CD4-positive, alpha-beta T cell (primary cell): ENCODE measurements at regions of chr16 and their contacts with region 1.

Region 1: DNA sequence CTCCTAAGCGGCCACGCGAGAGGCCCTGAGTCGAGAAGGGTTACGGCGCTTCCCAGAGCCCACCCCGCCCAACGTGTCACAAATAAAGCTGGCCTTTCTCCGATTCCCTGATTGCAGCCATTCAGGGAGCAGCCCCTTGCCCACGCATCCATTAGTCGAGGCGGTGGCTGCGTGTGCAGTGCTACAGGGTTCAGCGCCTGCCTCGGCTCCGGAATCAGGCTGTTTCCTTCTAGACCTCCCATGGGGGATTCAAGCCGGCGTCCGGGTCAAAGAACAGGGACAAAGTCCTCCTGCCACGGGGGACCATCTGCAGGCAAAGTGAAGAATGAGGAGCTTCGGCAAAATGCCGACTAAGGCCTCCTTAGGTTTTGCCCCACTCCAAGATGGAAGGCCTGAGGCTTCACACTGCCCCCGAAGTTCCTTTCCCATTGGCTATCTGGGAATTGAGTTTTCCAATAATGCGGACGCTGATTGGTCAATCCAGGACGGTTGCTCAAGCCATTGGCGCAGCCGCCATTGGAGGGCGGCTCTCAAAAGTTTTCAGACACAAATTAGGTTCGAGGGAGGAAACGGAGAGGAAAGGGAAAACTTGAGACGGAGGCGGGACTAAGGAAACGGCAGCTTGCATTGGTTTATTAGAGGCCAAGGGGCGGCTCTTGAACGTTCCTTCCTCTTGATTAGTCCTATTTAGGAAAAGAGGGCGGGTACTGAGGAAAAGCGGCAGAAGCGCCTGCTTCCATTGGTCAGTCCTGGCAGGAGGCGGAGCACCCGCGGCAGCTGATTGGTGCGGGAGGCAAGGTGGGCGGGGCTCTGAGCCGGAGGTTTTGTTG is 430 bp upstream of the KATNB1 start:
- DNase-seq: peak; percentile 94 to 100 (median 96)
- ATAC-seq: peak; percentile 88
- H3K4me3 ChIP-seq: peak overlapping the region; percentile 78
- H3K4me3 Mint-ChIP-seq: peak overlapping the region; percentile 95
- H3K27ac ChIP-seq: peak overlapping the region; percentile 60 to 77
- H3K27ac Mint-ChIP-seq: peak overlapping the region; percentile 87
- H3K4me1 ChIP-seq: peaks cover 29% of the 10 kb centered on the region
- H3K4me1 Mint-ChIP-seq: peaks cover 33% of the 10 kb centered on the region
- H3K27me3 ChIP-seq: no peaks in the 10 kb centered on the region
- H3K27me3 Mint-ChIP-seq: no peaks in the 10 kb centered on the region
- CTCF ChIP-seq: no peak

Region 2: DNA sequence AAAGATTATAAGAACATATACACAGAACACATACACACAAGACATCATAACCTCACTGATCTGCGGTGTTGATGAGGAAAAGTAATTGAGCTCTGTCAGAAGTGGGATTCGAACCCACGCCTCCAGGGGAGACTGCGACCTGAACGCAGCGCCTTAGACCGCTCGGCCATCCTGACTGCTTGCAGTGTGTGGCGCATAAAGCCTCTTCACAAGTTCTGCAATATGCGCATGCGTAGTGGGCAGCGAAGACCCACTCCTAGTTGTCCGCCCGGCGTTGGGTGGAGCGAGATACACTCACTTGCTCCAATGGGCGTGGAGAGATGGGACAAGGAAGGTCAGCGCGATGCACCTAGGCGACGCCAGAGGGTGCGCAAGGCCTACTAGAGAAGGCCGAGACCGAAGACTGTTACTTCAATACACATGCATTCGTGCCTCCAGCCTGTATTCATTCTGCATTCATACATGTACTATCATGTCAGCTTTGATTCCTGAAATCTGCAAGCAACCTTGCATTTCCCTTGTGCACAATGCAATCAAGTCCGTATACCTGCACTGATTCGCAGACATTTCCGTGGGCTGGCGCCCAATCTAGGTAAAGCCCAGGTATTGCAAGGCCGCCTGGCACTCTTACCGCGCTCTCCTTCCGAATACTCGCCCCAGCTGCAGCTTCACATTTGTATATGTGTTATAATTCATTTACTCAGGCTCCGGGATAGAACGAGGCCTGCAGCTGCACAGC is 434.6 kb before region 1 on chr16:
- CTCF ChIA-PET with region 1: no interaction called
- POLR2A ChIA-PET with region 1: interaction called, 3 read pairs
- intact Hi-C with region 1: loop called in 1 of 2 experiments (anchors 5 kb)
- DNase-seq: peak; percentile 97 to 100 (median 99)
- ATAC-seq: peak; percentile 91
- H3K4me3 ChIP-seq: peak overlapping the region; percentile 58
- H3K4me3 Mint-ChIP-seq: no peak overlapping the region
- H3K27ac ChIP-seq: peak overlapping the region; percentile 50 to 79
- H3K27ac Mint-ChIP-seq: no peak overlapping the region
- H3K4me1 ChIP-seq: peaks cover 54% of the 10 kb centered on the region
- H3K4me1 Mint-ChIP-seq: peaks cover 16% of the 10 kb centered on the region
- H3K27me3 ChIP-seq: no peaks in the 10 kb centered on the region
- H3K27me3 Mint-ChIP-seq: no peaks in the 10 kb centered on the region
- CTCF ChIP-seq: peak; percentile 88

Region 3: DNA sequence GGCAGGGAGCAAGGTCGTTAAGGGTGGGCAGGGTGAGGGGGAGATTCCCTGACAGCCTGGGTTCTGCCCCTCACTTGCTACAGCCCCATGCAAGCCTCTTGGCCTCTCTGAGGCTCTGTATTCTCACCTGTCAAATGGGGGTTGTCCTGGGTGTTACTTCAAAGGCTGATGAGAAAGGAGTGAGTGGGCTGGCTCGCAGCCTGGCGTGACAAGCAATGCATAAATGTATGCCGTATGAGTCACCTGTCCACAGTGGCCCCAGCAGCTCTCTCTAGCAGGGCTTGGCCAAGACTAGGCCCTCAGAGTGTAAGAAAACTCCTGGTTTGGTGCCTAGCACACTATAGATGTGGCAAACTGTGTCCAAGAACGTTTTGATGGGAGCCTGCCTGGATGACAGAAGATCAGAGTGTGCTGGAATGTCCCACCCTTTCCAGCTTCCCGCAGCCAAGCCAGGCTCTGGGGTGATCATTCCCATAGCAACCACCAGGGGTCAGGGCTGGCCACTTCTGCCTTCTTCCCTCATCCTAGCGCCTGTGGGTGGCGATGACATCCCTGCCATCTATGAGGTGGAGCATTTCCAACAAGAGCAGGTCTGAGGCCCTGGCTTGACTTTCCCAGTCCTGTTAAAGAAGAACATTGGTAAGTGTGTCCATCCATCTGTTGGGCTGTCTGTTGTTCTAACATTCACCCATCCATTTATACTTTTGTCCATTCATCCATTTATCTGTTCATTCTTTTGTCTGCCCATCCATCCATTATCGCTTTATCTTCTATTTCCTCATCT is 143.9 kb before region 1 on chr16:
- CTCF ChIA-PET with region 1: no interaction called
- POLR2A ChIA-PET with region 1: interaction called, 4 read pairs
- intact Hi-C with region 1: loop called (anchors 2 to 5 kb)
- DNase-seq: peak; percentile 40 to 81 (median 52)
- ATAC-seq: peak; percentile 45
- H3K4me3 ChIP-seq: no peak overlapping the region
- H3K4me3 Mint-ChIP-seq: peak overlapping the region; percentile 57
- H3K27ac ChIP-seq: no peak overlapping the region
- H3K27ac Mint-ChIP-seq: peak overlapping the region; percentile 70
- H3K4me1 ChIP-seq: peaks cover 32% of the 10 kb centered on the region
- H3K4me1 Mint-ChIP-seq: peaks cover 42% of the 10 kb centered on the region
- H3K27me3 ChIP-seq: no peaks in the 10 kb centered on the region
- H3K27me3 Mint-ChIP-seq: no peaks in the 10 kb centered on the region
- CTCF ChIP-seq: peak; percentile 83

Region 4: GRCh38 chr16:57984331-57985203 is 249.4 kb after region 1 on chr16:
- CTCF ChIA-PET with region 1: no interaction called
- POLR2A ChIA-PET with region 1: no interaction called
- intact Hi-C with region 1: loop called in 1 of 2 experiments (anchors 5 kb)
- DNase-seq: peak; percentile 85 to 97 (median 92)
- ATAC-seq: peak; percentile 98
- H3K4me3 ChIP-seq: peak overlapping the region; percentile 81
- H3K4me3 Mint-ChIP-seq: peak overlapping the region; percentile 94
- H3K27ac ChIP-seq: peak overlapping the region; percentile 29 to 50
- H3K27ac Mint-ChIP-seq: peak overlapping the region; percentile 56
- H3K4me1 ChIP-seq: peaks cover 22% of the 10 kb centered on the region
- H3K4me1 Mint-ChIP-seq: peaks cover 15% of the 10 kb centered on the region
- H3K27me3 ChIP-seq: no peaks in the 10 kb centered on the region
- H3K27me3 Mint-ChIP-seq: no peaks in the 10 kb centered on the region
- CTCF ChIP-seq: no peak

Region 5: GRCh38 chr16:58198022-58198683 is 463.0 kb after region 1 on chr16 and contains the start of gene CSNK2A2:
- CTCF ChIA-PET with region 1: no interaction called
- POLR2A ChIA-PET with region 1: interaction called, 3 read pairs
- intact Hi-C with region 1: loop called in 1 of 2 experiments (anchors 10 kb)
- DNase-seq: peak; percentile 48 to 88 (median 66)
- ATAC-seq: peak; percentile 94
- H3K4me3 ChIP-seq: peak within 1 kb of the TSS; percentile 65
- H3K4me3 Mint-ChIP-seq: peak within 1 kb of the TSS; percentile 90
- H3K27ac ChIP-seq: no peak within 1 kb of the TSS
- H3K27ac Mint-ChIP-seq: peak within 1 kb of the TSS; percentile 82
- H3K4me1 ChIP-seq: peaks cover 19% of the 10 kb centered on the region
- H3K4me1 Mint-ChIP-seq: peaks cover 54% of the 10 kb centered on the region
- H3K27me3 ChIP-seq: peaks cover 5% of the 10 kb centered on the region in 2 experiments
- H3K27me3 Mint-ChIP-seq: peaks cover 7% of the 10 kb centered on the region
- CTCF ChIP-seq: no peak
- total RNA-seq, gene CSNK2A2: 49.0 to 51.0 TPM

Region 6: GRCh38 chr16:59369523-59369922 is 1634.4 kb after region 1 on chr16:
- CTCF ChIA-PET with region 1: no interaction called
- POLR2A ChIA-PET with region 1: no interaction called
- intact Hi-C with region 1: no loop called
- DNase-seq: no peak
- ATAC-seq: no peak
- H3K4me3 ChIP-seq: no peak overlapping the region
- H3K4me3 Mint-ChIP-seq: no peak overlapping the region
- H3K27ac ChIP-seq: no peak overlapping the region
- H3K27ac Mint-ChIP-seq: no peak overlapping the region
- H3K4me1 ChIP-seq: no peaks in the 10 kb centered on the region
- H3K4me1 Mint-ChIP-seq: no peaks in the 10 kb centered on the region
- H3K27me3 ChIP-seq: no peaks in the 10 kb centered on the region
- H3K27me3 Mint-ChIP-seq: no peaks in the 10 kb centered on the region
- CTCF ChIP-seq: no peak